K562 (cell line): ENCODE measurements at regions of chr19 and their contacts with region 1.

Region 1: DNA sequence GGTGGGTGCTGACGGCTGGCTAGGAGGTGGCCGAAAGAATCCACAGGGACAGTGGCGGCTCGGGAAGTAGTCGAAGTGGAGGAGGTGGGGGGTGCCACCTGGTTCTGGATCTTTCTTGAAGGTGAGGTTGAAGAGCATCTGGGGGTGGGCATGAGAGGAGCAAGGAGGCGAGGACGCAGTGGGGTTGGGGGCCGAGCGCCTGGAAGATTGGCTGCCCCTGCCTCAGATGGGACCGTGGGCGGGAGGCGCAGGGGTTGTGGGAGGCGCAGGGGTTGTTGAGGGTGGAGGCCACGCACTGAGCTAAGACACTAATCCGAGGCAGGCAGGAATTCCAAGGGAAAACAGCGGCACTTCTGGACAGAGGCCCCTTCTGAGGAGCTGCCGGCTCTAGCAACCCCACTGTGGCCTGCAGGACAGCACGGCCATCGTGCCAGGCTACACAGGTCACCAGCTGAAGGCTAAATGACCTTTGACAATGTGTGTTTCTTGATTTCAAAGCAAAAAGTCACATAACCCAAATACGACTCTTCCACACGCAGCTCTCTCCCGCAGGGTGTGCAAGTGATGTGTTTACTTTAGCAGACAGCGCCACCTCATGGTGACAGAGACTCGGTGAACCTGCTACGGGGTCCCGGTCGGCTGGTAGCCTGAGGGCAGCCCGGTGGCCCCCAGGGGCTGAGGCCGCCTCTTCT is 44.1 kb upstream of the RANBP3 start:
- DNase-seq: peak; percentile 84 to 90 (median 86)
- ATAC-seq: peak; percentile 99
- H3K4me3 ChIP-seq: no peak overlapping the region
- H3K27ac ChIP-seq: no peak overlapping the region
- H3K4me1 ChIP-seq: peaks cover 0 to 23% of the 10 kb centered on the region in 2 experiments; a peak in 2 of 5 replicates
- H3K27me3 ChIP-seq: no peaks in the 10 kb centered on the region
- CTCF ChIP-seq: peak; percentile 89 to 94 (median 91)
- EP300 ChIP-seq: no peak
- POLR2A ChIP-seq: no peak
- RAD21 ChIP-seq: peak; percentile 85 to 92

Region 2: GRCh38 chr19:5774921-5775320 is 247.1 kb before region 1 on chr19:
- CTCF ChIA-PET with region 1: interaction called, 18 read pairs
- POLR2A ChIA-PET with region 1: interaction called, 3 read pairs
- in situ Hi-C with region 1: no loop called
- intact Hi-C with region 1: no loop called
- DNase-seq: no peak
- ATAC-seq: no peak
- H3K4me3 ChIP-seq: no peak overlapping the region
- H3K27ac ChIP-seq: no peak overlapping the region
- H3K4me1 ChIP-seq: peaks cover 0 to 10% of the 10 kb centered on the region in 2 experiments; a peak in 4 of 5 replicates
- H3K27me3 ChIP-seq: peaks cover 2 to 11% of the 10 kb centered on the region in 2 experiments; a peak in 2 of 5 replicates
- CTCF ChIP-seq: no peak
- EP300 ChIP-seq: no peak
- POLR2A ChIP-seq: no peak
- RAD21 ChIP-seq: no peak

Region 3: DNA sequence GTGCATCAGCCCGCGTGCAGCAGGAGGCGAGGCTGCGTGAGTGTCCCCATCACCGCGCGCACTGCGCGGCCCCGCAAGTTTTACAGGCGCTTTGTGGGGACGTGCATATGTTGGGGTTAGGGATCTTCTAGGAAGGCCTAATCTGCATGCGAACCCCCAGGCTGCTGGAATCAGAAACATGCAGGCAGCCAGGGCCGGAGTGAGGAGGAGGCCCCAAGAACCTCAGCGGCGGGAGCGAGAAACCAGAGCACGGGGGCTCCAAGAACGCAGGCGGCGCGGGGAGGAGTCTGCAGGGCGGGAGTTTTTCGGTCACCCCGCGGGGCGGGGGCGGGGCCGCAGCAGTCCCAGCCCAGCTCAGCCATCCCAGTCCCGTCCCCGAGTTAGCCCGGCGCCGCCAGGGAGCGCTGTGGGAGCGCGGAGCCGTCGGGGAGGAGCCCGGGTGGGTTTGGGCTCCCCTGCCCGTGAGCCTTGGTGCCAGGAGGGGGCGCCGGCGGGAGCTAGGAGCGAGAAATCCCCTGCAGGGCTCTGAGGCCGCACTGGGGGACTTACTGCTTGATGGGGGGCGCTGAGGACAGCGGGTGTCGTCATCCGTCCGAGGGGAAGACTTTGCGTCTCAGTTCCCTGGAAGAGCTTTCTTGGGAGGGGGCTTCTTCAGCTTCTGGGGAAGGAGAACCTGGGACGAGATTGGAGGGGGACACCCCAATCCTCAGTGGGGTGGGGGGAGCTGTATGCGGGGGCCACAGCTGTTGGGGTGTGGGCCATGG is 218.1 kb before region 1 on chr19:
- CTCF ChIA-PET with region 1: interaction called, 32 read pairs
- POLR2A ChIA-PET with region 1: no interaction called
- in situ Hi-C with region 1: loop called (anchors 5 kb)
- intact Hi-C with region 1: loop called (anchors 5 kb)
- DNase-seq: peak; percentile 94 to 97 (median 96)
- ATAC-seq: peak; percentile 93
- H3K4me3 ChIP-seq: peak overlapping the region; percentile 30; the same call in 1 of the 2 replicates
- H3K27ac ChIP-seq: peak overlapping the region; percentile 5; the same call in 2 of the 3 replicates
- H3K4me1 ChIP-seq: peaks cover 34 to 76% of the 10 kb centered on the region in 2 experiments
- H3K27me3 ChIP-seq: no peaks in the 10 kb centered on the region
- CTCF ChIP-seq: peak; percentile 98 to 100 (median 99)
- EP300 ChIP-seq: no peak
- POLR2A ChIP-seq: no peak
- RAD21 ChIP-seq: peak; percentile 91 to 96

Region 4: DNA sequence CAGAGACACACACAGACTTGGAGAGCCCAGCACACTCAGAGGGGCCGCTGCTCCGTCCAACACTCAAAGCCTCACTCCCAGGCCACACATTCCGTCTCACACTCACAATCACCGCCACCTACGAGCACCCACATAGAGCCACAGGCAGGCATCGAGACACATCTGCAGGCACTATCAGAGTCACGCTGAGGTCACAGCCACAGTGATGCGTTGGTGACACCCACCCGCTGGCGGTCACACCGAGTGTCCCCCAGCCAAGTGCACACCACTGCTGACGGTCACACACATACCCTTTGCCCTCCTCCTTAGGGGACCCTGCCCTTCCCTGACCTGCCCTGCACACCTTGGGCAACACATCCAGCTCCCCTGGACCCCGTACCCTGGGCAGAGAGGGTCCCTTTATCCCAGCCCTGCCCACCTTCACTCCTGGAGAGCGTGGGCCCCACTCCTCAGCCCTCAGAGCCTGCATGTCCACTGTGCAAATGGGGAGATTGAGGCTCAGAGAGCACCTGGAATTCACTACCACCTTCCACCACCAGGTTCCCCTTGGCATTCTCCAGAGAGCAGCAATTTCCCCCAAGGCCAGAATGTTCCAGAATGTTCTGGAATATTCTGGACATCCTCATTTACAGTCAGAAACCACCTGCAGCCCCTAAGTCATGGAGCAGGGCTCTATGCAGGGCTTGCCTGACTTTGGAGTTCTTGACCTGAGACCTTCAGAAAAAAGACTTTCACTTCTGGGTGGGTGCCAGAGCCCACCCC is 157.1 kb before region 1 on chr19:
- CTCF ChIA-PET with region 1: no interaction called
- POLR2A ChIA-PET with region 1: no interaction called
- in situ Hi-C with region 1: no loop called
- intact Hi-C with region 1: no loop called
- DNase-seq: peak in 1 of 4 experiments; percentile 6
- ATAC-seq: no peak
- H3K4me3 ChIP-seq: no peak overlapping the region
- H3K27ac ChIP-seq: no peak overlapping the region
- H3K4me1 ChIP-seq: peaks cover 0 to 23% of the 10 kb centered on the region in 2 experiments; a peak in 2 of 5 replicates
- H3K27me3 ChIP-seq: peaks cover 2 to 19% of the 10 kb centered on the region in 2 experiments; a peak in 2 of 5 replicates
- CTCF ChIP-seq: 0 out of 6 replicates have a peak, but pooled peaks of 1 of the 3 experiments have one; percentile 11
- EP300 ChIP-seq: peak; percentile 17; the same call in 1 of the 2 replicates
- POLR2A ChIP-seq: no peak
- RAD21 ChIP-seq: no peak

Region 5: GRCh38 chr19:5953680-5954213 is 68.3 kb before region 1 on chr19:
- CTCF ChIA-PET with region 1: no interaction called
- POLR2A ChIA-PET with region 1: no interaction called
- in situ Hi-C with region 1: no loop called
- intact Hi-C with region 1: no loop called
- DNase-seq: peak; percentile 41 to 60 (median 46)
- ATAC-seq: peak; percentile 65
- H3K4me3 ChIP-seq: peak overlapping the region; percentile 1; the same call in 1 of the 2 replicates
- H3K27ac ChIP-seq: peak overlapping the region; percentile 70
- H3K4me1 ChIP-seq: peaks cover 43 to 46% of the 10 kb centered on the region in 2 experiments
- H3K27me3 ChIP-seq: no peaks in the 10 kb centered on the region
- CTCF ChIP-seq: no peak
- EP300 ChIP-seq: no peak
- POLR2A ChIP-seq: no peak
- RAD21 ChIP-seq: no peak

Region 6: DNA sequence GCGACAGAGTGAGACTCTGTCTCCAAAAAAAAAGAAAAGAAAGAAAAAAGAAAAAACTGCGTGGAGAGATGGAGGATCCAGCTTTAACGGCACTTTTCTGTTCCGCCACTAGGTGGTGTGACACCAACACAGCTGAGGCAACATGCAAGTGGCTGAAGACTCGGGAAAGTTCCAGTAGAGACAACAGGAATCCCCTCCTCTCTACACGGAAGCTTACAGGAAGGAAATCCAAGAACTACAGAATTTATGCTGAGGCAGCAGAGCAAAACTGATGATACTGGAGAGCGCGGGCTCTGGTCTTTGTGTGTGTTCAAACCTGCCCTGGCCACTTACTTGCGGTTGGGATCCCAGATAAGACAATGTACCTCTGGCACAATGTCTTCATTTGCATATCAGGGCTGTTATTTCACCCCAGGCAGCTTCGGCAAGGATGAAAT is 54.0 kb before region 1 on chr19:
- CTCF ChIA-PET with region 1: interaction called, 26 read pairs
- POLR2A ChIA-PET with region 1: interaction called, 3 read pairs
- in situ Hi-C with region 1: no loop called
- intact Hi-C with region 1: no loop called
- DNase-seq: peak; percentile 68 to 79 (median 74)
- ATAC-seq: peak; percentile 85
- H3K4me3 ChIP-seq: no peak overlapping the region
- H3K27ac ChIP-seq: peak overlapping the region; percentile 51
- H3K4me1 ChIP-seq: peaks cover 26 to 28% of the 10 kb centered on the region in 2 experiments
- H3K27me3 ChIP-seq: no peaks in the 10 kb centered on the region
- CTCF ChIP-seq: peak; percentile 81 to 92 (median 87)
- EP300 ChIP-seq: peak; percentile 58; the same call in 1 of the 2 replicates
- POLR2A ChIP-seq: no peak
- RAD21 ChIP-seq: peak; percentile 44 to 70; a peak in 3 of 4 replicates

Region 7: DNA sequence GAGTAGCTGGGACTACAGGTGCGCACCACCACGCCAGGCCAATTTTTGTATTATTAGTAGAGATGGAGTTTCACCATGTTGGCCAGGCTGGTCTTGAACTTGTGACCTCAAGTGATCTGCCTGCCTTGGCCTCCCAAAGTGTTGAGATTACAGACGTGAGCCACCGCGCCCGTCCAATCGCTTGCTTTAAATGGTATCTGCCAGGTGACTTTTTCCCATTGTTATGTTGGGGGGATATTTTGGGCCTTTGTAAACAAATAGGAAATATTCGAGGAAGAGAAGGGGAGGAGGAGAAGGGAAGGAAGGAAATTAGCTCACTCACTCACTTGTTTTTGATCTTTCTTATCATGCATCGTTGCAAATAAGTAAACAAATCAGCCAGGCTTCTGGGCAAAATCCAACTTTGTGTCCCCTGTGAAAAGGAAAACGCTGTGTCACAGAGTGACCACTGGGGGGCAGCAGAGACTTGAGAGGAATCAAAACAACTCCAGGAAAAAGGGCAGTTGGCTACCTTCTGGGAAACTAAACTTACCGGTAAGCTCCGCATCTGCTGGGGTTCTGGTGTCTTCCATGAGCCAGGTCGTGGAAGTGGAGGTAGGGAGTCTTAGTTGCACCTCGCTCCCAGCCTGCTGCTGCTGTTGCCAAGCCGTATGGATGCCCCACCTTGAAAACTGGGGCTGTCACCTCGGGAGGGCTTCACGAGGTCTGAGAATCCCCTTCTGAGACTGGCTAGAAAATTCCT is 34.8 kb before region 1 on chr19:
- CTCF ChIA-PET with region 1: interaction called, 12 read pairs
- POLR2A ChIA-PET with region 1: interaction called, 4 read pairs
- in situ Hi-C with region 1: no loop called
- intact Hi-C with region 1: loop called (anchors 1 kb)
- DNase-seq: peak; percentile 63 to 87 (median 74)
- ATAC-seq: peak; percentile 22
- H3K4me3 ChIP-seq: peak overlapping the region; percentile 22
- H3K27ac ChIP-seq: peak overlapping the region; percentile 48
- H3K4me1 ChIP-seq: peaks cover 44 to 46% of the 10 kb centered on the region in 2 experiments
- H3K27me3 ChIP-seq: no peaks in the 10 kb centered on the region
- CTCF ChIP-seq: peak; percentile 87 to 96 (median 94)
- EP300 ChIP-seq: peak; percentile 32; the same call in 1 of the 2 replicates
- POLR2A ChIP-seq: no peak
- RAD21 ChIP-seq: peak; percentile 69 to 81

Region 8: GRCh38 chr19:6048808-6049405 is 26.9 kb after region 1 on chr19:
- CTCF ChIA-PET with region 1: no interaction called
- POLR2A ChIA-PET with region 1: no interaction called
- in situ Hi-C with region 1: no loop called
- intact Hi-C with region 1: no loop called
- DNase-seq: peak; percentile 83 to 89 (median 85)
- ATAC-seq: peak; percentile 100
- H3K4me3 ChIP-seq: no peak overlapping the region
- H3K27ac ChIP-seq: no peak overlapping the region
- H3K4me1 ChIP-seq: peaks cover 4 to 9% of the 10 kb centered on the region in 2 experiments; a peak in 3 of 5 replicates
- H3K27me3 ChIP-seq: no peaks in the 10 kb centered on the region
- CTCF ChIP-seq: peak; percentile 76 to 93 (median 92)
- EP300 ChIP-seq: no peak
- POLR2A ChIP-seq: no peak
- RAD21 ChIP-seq: peak; percentile 84 to 96

Region 9: DNA sequence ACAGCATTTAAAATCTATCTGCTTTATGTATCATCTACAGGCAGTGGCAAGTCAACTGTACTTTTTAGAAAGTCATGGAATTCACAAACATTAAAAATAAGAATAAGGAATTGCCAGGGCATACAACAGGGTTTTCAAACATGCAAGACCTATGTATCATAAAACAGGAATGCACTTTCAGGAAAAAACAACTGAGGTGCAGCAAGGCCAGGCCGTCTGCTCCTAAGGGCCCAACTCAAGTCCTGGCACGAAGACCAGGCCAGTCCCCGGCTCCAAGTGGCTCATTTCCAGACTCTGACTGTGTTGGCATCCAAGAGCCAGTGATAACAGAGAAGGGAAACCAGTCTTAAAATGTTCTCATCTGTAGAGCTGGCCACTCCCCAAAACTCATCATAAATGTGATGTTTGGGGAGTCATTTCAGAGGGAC is 81.2 kb after region 1 on chr19:
- CTCF ChIA-PET with region 1: no interaction called
- POLR2A ChIA-PET with region 1: no interaction called
- in situ Hi-C with region 1: no loop called
- intact Hi-C with region 1: no loop called
- DNase-seq: no peak
- ATAC-seq: no peak
- H3K4me3 ChIP-seq: no peak overlapping the region
- H3K27ac ChIP-seq: no peak overlapping the region
- H3K4me1 ChIP-seq: peaks cover 18 to 23% of the 10 kb centered on the region in 2 experiments; a peak in 4 of 5 replicates
- H3K27me3 ChIP-seq: no peaks in the 10 kb centered on the region
- CTCF ChIP-seq: no peak
- EP300 ChIP-seq: no peak
- POLR2A ChIP-seq: no peak
- RAD21 ChIP-seq: no peak